ENCODE measurements at regions of chr1 and their contacts with region 1.

Region 1: DNA sequence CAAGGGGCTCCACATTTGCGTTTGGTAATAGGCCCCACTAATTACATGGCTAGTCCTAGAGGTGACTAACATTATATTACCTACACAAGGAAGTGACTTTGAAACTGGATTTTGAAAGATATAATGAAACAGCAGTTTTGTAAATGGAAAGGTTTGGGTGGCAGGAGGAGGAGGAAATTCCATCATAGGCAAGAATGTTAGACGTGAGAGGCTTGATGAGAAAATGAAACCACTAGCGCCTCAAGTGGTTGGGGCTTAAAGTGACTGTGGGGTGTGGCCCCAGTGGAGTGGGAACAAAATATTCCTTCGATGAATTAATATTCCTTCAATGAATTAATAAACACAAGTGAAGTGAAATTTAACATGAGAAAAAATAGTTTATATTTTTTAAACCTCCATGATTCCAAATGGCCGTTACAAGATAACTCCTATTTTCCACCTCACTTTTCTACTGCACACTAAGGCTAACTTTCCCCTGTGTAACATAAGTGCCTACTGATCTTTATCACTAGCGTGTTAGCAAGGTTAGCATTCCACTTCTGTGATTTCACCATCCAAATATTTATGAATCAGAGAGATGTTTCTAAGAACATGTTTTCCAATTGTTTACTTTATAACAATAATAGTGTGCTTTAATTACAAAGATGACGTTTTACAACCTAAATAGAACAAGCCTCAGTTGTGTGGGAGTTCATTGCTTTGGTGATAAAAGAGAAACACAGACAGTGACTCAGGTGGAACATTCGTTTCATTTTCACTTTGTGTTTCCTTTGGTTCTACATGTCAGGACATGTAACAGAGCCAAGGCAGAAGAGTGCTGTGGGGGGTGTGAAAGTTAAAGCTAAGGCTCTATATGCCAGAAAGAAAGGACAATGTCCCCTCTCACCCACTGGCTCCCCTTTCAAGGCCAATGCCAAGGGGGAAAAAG is 12.5 kb upstream of the ATF3 start:
- DNase-seq: peak; percentile 69
- H3K4me3 Mint-ChIP-seq: peak overlapping the region; percentile 44
- H3K27ac Mint-ChIP-seq: peak overlapping the region; percentile 94
- H3K4me1 Mint-ChIP-seq: peaks cover 34% of the 10 kb centered on the region
- H3K27me3 Mint-ChIP-seq: peaks cover 21% of the 10 kb centered on the region

Region 2: GRCh38 chr1:212229654-212230053 is 366.4 kb before region 1 on chr1:
- CTCF ChIA-PET with region 1: no interaction called
- intact Hi-C with region 1: loop called (anchors 5 kb)
- DNase-seq: no peak
- H3K4me3 Mint-ChIP-seq: no peak overlapping the region
- H3K27ac Mint-ChIP-seq: no peak overlapping the region
- H3K4me1 Mint-ChIP-seq: peaks cover 23% of the 10 kb centered on the region
- H3K27me3 Mint-ChIP-seq: no peaks in the 10 kb centered on the region

Region 3: GRCh38 chr1:212401838-212402582 is 194.0 kb before region 1 on chr1:
- CTCF ChIA-PET with region 1: no interaction called
- intact Hi-C with region 1: no loop called
- DNase-seq: no peak
- H3K4me3 Mint-ChIP-seq: no peak overlapping the region
- H3K27ac Mint-ChIP-seq: no peak overlapping the region
- H3K4me1 Mint-ChIP-seq: peaks cover 11% of the 10 kb centered on the region
- H3K27me3 Mint-ChIP-seq: no peaks in the 10 kb centered on the region

Region 4: DNA sequence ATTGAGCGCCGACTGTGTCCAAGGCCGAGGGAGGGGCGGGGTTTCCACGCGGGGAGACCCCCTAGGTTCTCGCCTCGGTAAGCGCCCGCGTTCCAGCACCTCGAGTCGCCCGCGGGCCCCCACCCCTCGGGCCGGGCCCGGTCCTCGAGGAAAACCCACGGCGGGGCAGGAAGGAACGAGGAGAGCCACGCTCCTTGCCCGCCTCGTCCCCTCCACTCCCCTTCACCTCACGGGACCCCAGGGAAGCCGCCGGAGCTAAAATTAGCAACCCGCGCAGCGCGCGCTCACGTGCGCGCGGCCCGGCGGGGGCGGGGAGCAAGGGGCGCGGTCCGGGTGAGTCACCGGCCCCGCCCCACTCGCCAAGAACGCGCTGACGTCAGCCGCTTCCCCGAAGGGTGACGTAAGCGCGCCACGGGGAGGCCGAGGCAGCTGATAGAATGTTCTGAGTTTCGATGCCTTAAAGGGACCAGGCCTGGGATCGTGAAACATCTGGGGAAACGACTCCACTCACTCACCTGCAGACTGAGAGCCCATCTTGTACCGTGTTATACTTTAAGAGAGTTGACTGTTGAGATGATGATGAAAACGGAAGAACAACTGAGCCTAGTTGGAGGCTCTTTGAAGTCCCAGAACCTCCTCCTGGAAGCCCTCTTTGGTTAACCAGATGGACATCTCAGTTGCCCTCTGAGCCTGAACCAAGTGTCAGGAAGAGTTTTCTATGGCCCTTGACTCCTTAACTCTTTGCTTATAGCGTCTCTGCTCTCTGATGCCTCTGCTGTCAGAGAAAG is 37.2 kb before region 1 on chr1:
- CTCF ChIA-PET with region 1: interaction called, 3 read pairs
- intact Hi-C with region 1: loop called (anchors 1 kb)
- DNase-seq: peak; percentile 94
- H3K4me3 Mint-ChIP-seq: peak overlapping the region; percentile 66
- H3K27ac Mint-ChIP-seq: peak overlapping the region; percentile 92
- H3K4me1 Mint-ChIP-seq: peaks cover 13% of the 10 kb centered on the region
- H3K27me3 Mint-ChIP-seq: peaks cover 12% of the 10 kb centered on the region

Region 5: DNA sequence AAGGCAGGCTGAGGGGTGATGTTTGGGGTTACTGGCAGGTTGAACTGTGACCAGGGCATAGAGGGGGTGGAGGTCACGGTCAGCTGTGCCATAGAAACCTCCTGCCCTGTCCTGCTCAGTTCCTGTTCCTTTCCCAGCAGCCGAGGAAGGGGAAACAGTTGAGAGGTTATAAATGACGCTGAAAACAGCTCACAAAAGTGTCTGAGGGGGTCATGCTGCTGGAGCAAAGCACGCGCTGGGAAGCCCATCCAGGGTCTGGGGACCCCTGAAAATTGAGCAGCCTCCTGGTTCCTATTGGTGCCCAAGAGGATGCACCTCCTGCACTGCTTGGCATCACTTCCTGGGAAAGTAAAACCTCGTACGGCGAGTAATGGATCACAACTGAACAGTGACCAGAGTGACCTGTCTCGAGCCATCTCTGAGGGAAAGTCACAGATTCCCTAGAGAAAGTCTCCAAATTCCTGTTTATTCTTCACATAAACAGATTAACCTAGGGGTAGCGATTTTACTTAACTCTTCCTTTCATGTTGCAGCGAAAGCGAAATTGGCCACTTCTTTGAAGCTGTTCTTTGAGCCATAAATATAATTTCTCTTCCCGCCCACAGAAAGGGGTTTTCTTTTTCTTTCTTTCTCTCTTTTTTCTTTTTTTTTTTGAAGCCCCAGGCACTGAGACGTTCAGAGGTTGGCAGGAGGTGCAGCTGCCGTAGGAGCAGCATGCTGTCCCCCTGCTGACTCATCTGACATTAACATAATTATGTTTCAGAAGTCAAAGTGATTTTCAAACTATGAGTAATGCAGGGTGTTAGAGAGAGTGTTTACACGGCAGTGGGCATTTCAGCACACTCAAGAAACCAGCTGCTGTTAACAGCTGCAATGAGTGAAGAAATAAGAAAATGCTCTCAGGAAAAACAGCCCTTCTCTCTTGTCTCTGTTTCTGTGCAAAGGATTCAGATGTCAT is 29.2 kb before region 1 on chr1:
- CTCF ChIA-PET with region 1: interaction called, 4 read pairs
- intact Hi-C with region 1: loop called (anchors 1 kb)
- DNase-seq: peak; percentile 80
- H3K4me3 Mint-ChIP-seq: peak overlapping the region; percentile 78
- H3K27ac Mint-ChIP-seq: peak overlapping the region; percentile 88
- H3K4me1 Mint-ChIP-seq: peaks cover 32% of the 10 kb centered on the region
- H3K27me3 Mint-ChIP-seq: no peaks in the 10 kb centered on the region

Region 6: GRCh38 chr1:212630158-212630900 is 34.3 kb after region 1 on chr1:
- CTCF ChIA-PET with region 1: interaction called, 3 read pairs
- intact Hi-C with region 1: loop called (anchors 2 kb)
- DNase-seq: peak; percentile 79
- H3K4me3 Mint-ChIP-seq: no peak overlapping the region
- H3K27ac Mint-ChIP-seq: no peak overlapping the region
- H3K4me1 Mint-ChIP-seq: peaks cover 6% of the 10 kb centered on the region
- H3K27me3 Mint-ChIP-seq: no peaks in the 10 kb centered on the region

Region 7: GRCh38 chr1:212671342-212672031 is 75.4 kb after region 1 on chr1:
- CTCF ChIA-PET with region 1: no interaction called
- intact Hi-C with region 1: no loop called
- DNase-seq: peak; percentile 23
- H3K4me3 Mint-ChIP-seq: no peak overlapping the region
- H3K27ac Mint-ChIP-seq: no peak overlapping the region
- H3K4me1 Mint-ChIP-seq: peaks cover 8% of the 10 kb centered on the region
- H3K27me3 Mint-ChIP-seq: peaks cover 15% of the 10 kb centered on the region

Region 8: GRCh38 chr1:212683357-212683722 is 87.3 kb after region 1 on chr1:
- CTCF ChIA-PET with region 1: no interaction called
- intact Hi-C with region 1: no loop called
- DNase-seq: peak; percentile 77
- H3K4me3 Mint-ChIP-seq: peak overlapping the region; percentile 33
- H3K27ac Mint-ChIP-seq: peak overlapping the region; percentile 76
- H3K4me1 Mint-ChIP-seq: peaks cover 31% of the 10 kb centered on the region
- H3K27me3 Mint-ChIP-seq: no peaks in the 10 kb centered on the region